Activated T-helper 1 cell treated with anti-CD3 and anti-CD28 coated beads, Interleukin-12 subunit alpha, Interleukin-12 subunit beta, Interleukin-2, Interleukin-4 antibody, amounts not matched to agents 30 ng/mL and 10 ng/mL and 1 ng/mL, durations not matched to agents 14 hours and 24 hours and 36 hours (primary cell): ENCODE measurements at regions of chr3 and their contacts with region 1.

Region 1: GRCh38 chr3:45507820-45508317 is 86.7 kb upstream of the LIMD1 start:
- DNase-seq: no peak
- H3K4me3 Mint-ChIP-seq: no peak overlapping the region
- H3K27ac Mint-ChIP-seq: no peak overlapping the region
- H3K4me1 Mint-ChIP-seq: peaks cover 13% of the 10 kb centered on the region
- H3K27me3 Mint-ChIP-seq: no peaks in the 10 kb centered on the region

Region 2: GRCh38 chr3:45224824-45225464 is 282.9 kb before region 1 on chr3:
- intact Hi-C with region 1: loop called (anchors 5 kb)
- DNase-seq: peak; percentile 4
- H3K4me3 Mint-ChIP-seq: peak overlapping the region; percentile 79
- H3K27ac Mint-ChIP-seq: peak overlapping the region; percentile 80
- H3K4me1 Mint-ChIP-seq: peaks cover 17% of the 10 kb centered on the region
- H3K27me3 Mint-ChIP-seq: peaks cover 75% of the 10 kb centered on the region

Region 3: DNA sequence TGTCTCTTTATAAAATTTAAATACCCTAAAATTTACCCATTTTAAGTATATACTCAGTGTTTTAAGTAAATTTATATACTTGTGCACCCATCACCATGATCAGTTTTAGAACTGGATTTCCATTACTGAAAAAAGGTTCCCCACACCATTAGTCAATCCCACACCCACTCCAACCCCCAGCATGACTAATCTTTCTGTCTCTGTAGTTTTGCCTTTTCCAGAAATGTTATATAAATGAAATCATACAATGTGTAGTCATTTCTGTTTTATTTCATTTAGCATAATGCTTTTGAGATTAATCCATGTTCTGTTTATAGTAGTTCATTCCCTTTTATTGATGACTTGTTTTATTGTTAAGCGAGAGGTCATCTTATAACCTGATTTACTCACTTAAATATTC is 20.6 kb after region 1 on chr3:
- intact Hi-C with region 1: loop called (anchors 2 kb)
- DNase-seq: no peak
- H3K4me3 Mint-ChIP-seq: no peak overlapping the region
- H3K27ac Mint-ChIP-seq: peak overlapping the region; percentile 67
- H3K4me1 Mint-ChIP-seq: peaks cover 11% of the 10 kb centered on the region
- H3K27me3 Mint-ChIP-seq: no peaks in the 10 kb centered on the region

Region 4: GRCh38 chr3:45656575-45657363 is 148.9 kb after region 1 on chr3:
- intact Hi-C with region 1: loop called (anchors 1 kb)
- DNase-seq: peak; percentile 72
- H3K4me3 Mint-ChIP-seq: no peak overlapping the region
- H3K27ac Mint-ChIP-seq: no peak overlapping the region
- H3K4me1 Mint-ChIP-seq: peaks cover 12% of the 10 kb centered on the region
- H3K27me3 Mint-ChIP-seq: no peaks in the 10 kb centered on the region

Region 5: GRCh38 chr3:45929042-45929679 is 421.3 kb after region 1 on chr3:
- intact Hi-C with region 1: loop called (anchors 5 kb)
- DNase-seq: peak; percentile 47
- H3K4me3 Mint-ChIP-seq: no peak overlapping the region
- H3K27ac Mint-ChIP-seq: no peak overlapping the region
- H3K4me1 Mint-ChIP-seq: no peaks in the 10 kb centered on the region
- H3K27me3 Mint-ChIP-seq: no peaks in the 10 kb centered on the region